ENCODE measurements at regions of chr7 and their contacts with region 1.

Region 1: DNA sequence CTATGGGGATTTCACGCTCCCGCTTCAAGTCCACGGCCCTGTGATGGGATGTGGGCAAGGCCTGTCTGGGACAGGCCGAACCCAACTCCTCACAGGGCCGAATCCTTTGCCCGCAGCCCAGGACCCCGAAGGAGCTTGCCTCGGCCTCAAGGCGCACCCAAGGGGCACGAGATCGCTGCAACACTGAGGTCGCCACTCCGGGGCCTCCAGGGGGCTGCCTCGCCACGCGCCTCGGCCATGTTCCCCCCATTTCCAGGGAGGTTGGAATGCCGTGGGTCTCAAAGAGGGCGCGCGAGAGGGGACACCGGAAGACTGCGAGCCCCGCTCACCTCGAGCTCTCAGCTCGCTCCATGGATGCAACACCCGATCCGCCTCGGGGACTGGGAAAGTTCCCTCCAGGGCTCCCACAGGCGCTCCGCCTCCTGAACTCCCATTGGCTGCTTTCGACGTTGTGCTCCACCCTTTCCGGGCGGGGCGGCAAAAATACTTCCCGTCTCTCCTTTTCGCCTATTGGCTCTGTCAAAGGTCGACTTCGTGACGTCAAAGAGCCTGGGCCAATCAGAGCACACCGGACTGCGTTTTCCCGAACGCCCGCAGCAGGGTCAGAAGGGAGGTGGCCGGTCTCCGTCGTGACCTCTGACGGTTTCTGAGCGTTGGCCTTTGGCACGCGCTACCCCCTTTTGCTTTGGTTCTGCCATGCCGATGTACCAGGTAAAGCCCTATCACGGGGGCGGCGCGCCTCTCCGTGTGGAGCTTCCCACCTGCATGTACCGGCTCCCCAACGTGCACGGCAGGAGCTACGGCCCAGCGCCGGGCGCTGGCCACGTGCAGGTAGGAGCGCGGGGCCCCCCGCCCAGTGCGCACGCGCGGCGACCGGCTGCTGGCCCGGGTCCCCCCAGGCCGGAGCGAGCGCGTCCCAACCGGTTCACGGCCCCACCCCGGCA is at the starts of genes AIMP2 and PMS2:
- DNase-seq: peak; percentile 99
- H3K4me3 Mint-ChIP-seq: peak within 1 kb of the TSS; percentile 85
- H3K27ac Mint-ChIP-seq: peak within 1 kb of the TSS; percentile 92
- H3K4me1 Mint-ChIP-seq: peaks cover 41% of the 10 kb centered on the region
- H3K27me3 Mint-ChIP-seq: no peaks in the 10 kb centered on the region
- total RNA-seq, gene AIMP2: 38.6 to 39.5 TPM
- total RNA-seq, gene PMS2: 21.0 to 21.4 TPM

Region 2: GRCh38 chr7:5854738-5855137 is 154.2 kb before region 1 on chr7:
- CTCF ChIA-PET with region 1: interaction called, 6 read pairs
- POLR2A ChIA-PET with region 1: no interaction called
- intact Hi-C with region 1: loop called (anchors 10 kb)
- DNase-seq: no peak
- H3K4me3 Mint-ChIP-seq: no peak overlapping the region
- H3K27ac Mint-ChIP-seq: no peak overlapping the region
- H3K4me1 Mint-ChIP-seq: peaks cover 14% of the 10 kb centered on the region
- H3K27me3 Mint-ChIP-seq: no peaks in the 10 kb centered on the region

Region 3: GRCh38 chr7:5872326-5872725 is 136.6 kb before region 1 on chr7:
- CTCF ChIA-PET with region 1: no interaction called
- POLR2A ChIA-PET with region 1: no interaction called
- intact Hi-C with region 1: no loop called
- DNase-seq: no peak
- H3K4me3 Mint-ChIP-seq: no peak overlapping the region
- H3K27ac Mint-ChIP-seq: no peak overlapping the region
- H3K4me1 Mint-ChIP-seq: no peaks in the 10 kb centered on the region
- H3K27me3 Mint-ChIP-seq: no peaks in the 10 kb centered on the region

Region 4: GRCh38 chr7:6205971-6206660 is 197.2 kb after region 1 on chr7:
- CTCF ChIA-PET with region 1: no interaction called
- POLR2A ChIA-PET with region 1: no interaction called
- intact Hi-C with region 1: no loop called
- DNase-seq: no peak
- H3K4me3 Mint-ChIP-seq: no peak overlapping the region
- H3K27ac Mint-ChIP-seq: no peak overlapping the region
- H3K4me1 Mint-ChIP-seq: no peaks in the 10 kb centered on the region
- H3K27me3 Mint-ChIP-seq: no peaks in the 10 kb centered on the region

Region 5: GRCh38 chr7:6435486-6436384 is 426.8 kb after region 1 on chr7:
- CTCF ChIA-PET with region 1: no interaction called
- POLR2A ChIA-PET with region 1: no interaction called
- intact Hi-C with region 1: loop called (anchors 2 kb)
- DNase-seq: peak; percentile 92
- H3K4me3 Mint-ChIP-seq: peak overlapping the region; percentile 28
- H3K27ac Mint-ChIP-seq: peak overlapping the region; percentile 69
- H3K4me1 Mint-ChIP-seq: peaks cover 33% of the 10 kb centered on the region
- H3K27me3 Mint-ChIP-seq: no peaks in the 10 kb centered on the region

Measured in activated CD4-positive, alpha-beta memory T cell treated with anti-CD3 and anti-CD28 coated beads for 36 hours (primary cell).